ENCODE measurements at regions of chr6 and their contacts with region 1.

Region 1: DNA sequence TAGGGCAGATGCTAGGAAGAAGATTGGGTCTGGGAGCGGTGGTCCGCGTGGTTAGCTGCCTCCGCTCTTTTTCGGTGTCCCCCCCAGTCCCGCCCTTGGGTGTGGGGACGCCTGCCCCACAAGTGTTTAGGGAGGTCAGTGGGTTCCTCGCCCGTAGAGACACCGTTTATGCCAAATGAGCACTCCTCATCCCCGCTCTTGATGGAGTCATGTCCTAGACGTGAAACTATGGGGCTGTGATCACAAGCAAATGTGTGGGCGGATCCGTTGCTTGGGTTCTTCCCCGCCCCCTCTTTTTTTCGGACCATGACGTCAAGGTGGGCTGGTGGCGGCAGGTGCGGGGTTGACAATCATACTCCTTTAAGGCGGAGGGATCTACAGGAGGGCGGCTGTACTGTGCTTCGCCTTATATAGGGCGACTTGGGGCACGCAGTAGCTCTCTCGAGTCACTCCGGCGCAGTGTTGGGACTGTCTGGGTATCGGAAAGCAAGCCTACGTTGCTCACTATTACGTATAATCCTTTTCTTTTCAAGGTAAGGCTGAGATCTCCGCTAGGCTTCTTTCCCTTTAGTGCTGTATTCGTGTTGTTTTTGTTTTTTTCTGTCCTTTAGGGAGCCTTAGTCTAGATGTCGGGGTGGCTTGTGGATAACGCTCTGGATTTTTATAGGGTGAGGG is at the start of gene HSP90AB1:
- DNase-seq: peak; percentile 96
- H3K4me3 ChIP-seq: peak within 1 kb of the TSS; percentile 99
- CTCF ChIP-seq: no peak

Region 2: GRCh38 chr6:44086931-44087574 is 159.7 kb before region 1 on chr6:
- CTCF ChIA-PET with region 1: no interaction called
- POLR2A ChIA-PET with region 1: no interaction called
- DNase-seq: no peak
- H3K4me3 ChIP-seq: no peak overlapping the region
- CTCF ChIP-seq: no peak

Region 3: GRCh38 chr6:44221291-44221960 is 25.4 kb before region 1 on chr6:
- CTCF ChIA-PET with region 1: interaction called, 8 read pairs
- POLR2A ChIA-PET with region 1: interaction called, 16 read pairs
- DNase-seq: no peak
- H3K4me3 ChIP-seq: no peak overlapping the region
- CTCF ChIP-seq: peak; percentile 90

Region 4: GRCh38 chr6:44257025-44257752 is 10.4 kb after region 1 on chr6 and contains the start of gene SLC35B2:
- CTCF ChIA-PET with region 1: interaction called, 51 read pairs
- POLR2A ChIA-PET with region 1: interaction called, 109 read pairs
- DNase-seq: no peak
- H3K4me3 ChIP-seq: peak within 1 kb of the TSS; percentile 88
- CTCF ChIP-seq: peak; percentile 54

Measured in AG04449 (cell line).